CD8-positive, alpha-beta T cell (primary cell): ENCODE measurements at regions of chr11 and their contacts with region 1.

Region 1: GRCh38 chr11:118870396-118871345 is 13.0 kb upstream of the CXCR5 start:
- DNase-seq: peak in 3 of 9 experiments; percentile 19 to 72 (median 61)
- ATAC-seq: peak; percentile 41
- H3K4me3 ChIP-seq: peak overlapping the region; percentile 22 to 30
- H3K4me3 Mint-ChIP-seq: peak overlapping the region; percentile 79
- H3K27ac ChIP-seq: peak overlapping the region; percentile 83 to 86
- H3K27ac Mint-ChIP-seq: peak overlapping the region; percentile 99
- H3K4me1 ChIP-seq: peaks cover 61% of the 10 kb centered on the region
- H3K4me1 Mint-ChIP-seq: peaks cover 60% of the 10 kb centered on the region
- H3K27me3 ChIP-seq: no peaks in the 10 kb centered on the region
- H3K27me3 Mint-ChIP-seq: no peaks in the 10 kb centered on the region
- CTCF ChIP-seq: no peak

Region 2: DNA sequence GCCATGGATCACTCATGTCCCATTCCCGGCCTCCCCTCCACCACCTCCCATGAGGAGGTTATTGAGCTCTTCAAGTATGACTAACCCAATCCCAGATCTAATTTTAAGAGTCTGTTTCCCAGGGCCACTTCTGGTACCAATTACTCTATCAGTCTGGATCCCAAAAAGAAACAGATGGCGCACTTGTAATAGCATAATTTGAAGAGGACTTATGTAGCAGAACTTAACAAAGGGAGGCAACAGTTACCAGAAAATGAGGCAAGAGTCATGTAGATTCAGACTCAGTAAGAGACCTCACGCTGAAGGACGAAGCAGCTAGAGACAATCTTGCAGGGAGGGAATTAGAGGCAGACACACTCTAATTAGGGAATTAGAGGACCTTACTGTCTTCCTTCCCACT is 126.6 kb before region 1 on chr11:
- CTCF ChIA-PET with region 1: no interaction called
- POLR2A ChIA-PET with region 1: no interaction called
- intact Hi-C with region 1: no loop called
- DNase-seq: no peak
- ATAC-seq: no peak
- H3K4me3 ChIP-seq: no peak overlapping the region
- H3K4me3 Mint-ChIP-seq: no peak overlapping the region
- H3K27ac ChIP-seq: no peak overlapping the region
- H3K27ac Mint-ChIP-seq: no peak overlapping the region
- H3K4me1 ChIP-seq: no peaks in the 10 kb centered on the region
- H3K4me1 Mint-ChIP-seq: peaks cover 6% of the 10 kb centered on the region
- H3K27me3 ChIP-seq: no peaks in the 10 kb centered on the region
- H3K27me3 Mint-ChIP-seq: no peaks in the 10 kb centered on the region
- CTCF ChIP-seq: no peak

Region 3: DNA sequence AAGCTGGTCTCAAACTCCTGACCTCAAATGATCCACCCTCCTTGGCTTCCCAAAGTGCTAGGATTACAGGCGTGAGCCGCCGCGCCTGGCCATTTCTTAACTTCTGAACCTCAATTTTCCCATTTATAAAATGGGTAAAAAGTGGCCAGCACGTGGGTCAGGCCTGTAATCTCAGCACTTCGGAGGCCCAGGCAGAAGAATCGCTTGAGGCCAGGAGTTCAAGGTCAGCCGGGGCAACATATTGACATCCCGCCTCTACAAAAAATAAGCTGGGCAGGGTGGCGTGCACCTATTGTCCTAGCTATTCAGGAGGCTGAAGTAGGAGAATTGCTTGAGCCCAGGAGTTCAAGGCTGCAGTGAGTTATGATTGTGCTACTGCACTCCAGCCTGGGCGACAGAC is 73.2 kb before region 1 on chr11:
- CTCF ChIA-PET with region 1: interaction called, 50 read pairs
- POLR2A ChIA-PET with region 1: interaction called, 119 read pairs
- intact Hi-C with region 1: loop called in 1 of 2 experiments (anchors 1 kb)
- DNase-seq: no peak
- ATAC-seq: no peak
- H3K4me3 ChIP-seq: no peak overlapping the region
- H3K4me3 Mint-ChIP-seq: no peak overlapping the region
- H3K27ac ChIP-seq: no peak overlapping the region
- H3K27ac Mint-ChIP-seq: no peak overlapping the region
- H3K4me1 ChIP-seq: peaks cover 9% of the 10 kb centered on the region
- H3K4me1 Mint-ChIP-seq: peaks cover 14% of the 10 kb centered on the region
- H3K27me3 ChIP-seq: no peaks in the 10 kb centered on the region
- H3K27me3 Mint-ChIP-seq: no peaks in the 10 kb centered on the region
- CTCF ChIP-seq: no peak

Region 4: GRCh38 chr11:118834427-118835028 is 36.1 kb before region 1 on chr11:
- CTCF ChIA-PET with region 1: interaction called, 3 read pairs
- POLR2A ChIA-PET with region 1: interaction called, 11 read pairs
- intact Hi-C with region 1: no loop called
- DNase-seq: peak in 2 of 9 experiments; percentile 25 to 53
- ATAC-seq: no peak
- H3K4me3 ChIP-seq: peak overlapping the region in 1 of 2 experiments; percentile 10
- H3K4me3 Mint-ChIP-seq: peak overlapping the region; percentile 75
- H3K27ac ChIP-seq: peak overlapping the region in 1 of 2 experiments; percentile 18
- H3K27ac Mint-ChIP-seq: peak overlapping the region; percentile 65
- H3K4me1 ChIP-seq: peaks cover 9% of the 10 kb centered on the region
- H3K4me1 Mint-ChIP-seq: peaks cover 20% of the 10 kb centered on the region
- H3K27me3 ChIP-seq: no peaks in the 10 kb centered on the region
- H3K27me3 Mint-ChIP-seq: no peaks in the 10 kb centered on the region
- CTCF ChIP-seq: no peak

Region 5: GRCh38 chr11:118889781-118890180 is 19.1 kb after region 1 on chr11:
- CTCF ChIA-PET with region 1: interaction called, 21 read pairs
- POLR2A ChIA-PET with region 1: interaction called, 35 read pairs
- intact Hi-C with region 1: no loop called
- DNase-seq: no peak
- ATAC-seq: no peak
- H3K4me3 ChIP-seq: no peak overlapping the region
- H3K4me3 Mint-ChIP-seq: peak overlapping the region; percentile 18
- H3K27ac ChIP-seq: no peak overlapping the region
- H3K27ac Mint-ChIP-seq: peak overlapping the region; percentile 85
- H3K4me1 ChIP-seq: peaks cover 77% of the 10 kb centered on the region
- H3K4me1 Mint-ChIP-seq: peaks cover 83% of the 10 kb centered on the region
- H3K27me3 ChIP-seq: no peaks in the 10 kb centered on the region
- H3K27me3 Mint-ChIP-seq: no peaks in the 10 kb centered on the region
- CTCF ChIP-seq: no peak

Region 6: GRCh38 chr11:118907051-118908042 is 36.7 kb after region 1 on chr11:
- CTCF ChIA-PET with region 1: interaction called, 13 read pairs
- POLR2A ChIA-PET with region 1: interaction called, 11 read pairs
- intact Hi-C with region 1: loop called (anchors 5 kb)
- DNase-seq: peak; percentile 79 to 94 (median 87)
- ATAC-seq: peak; percentile 41
- H3K4me3 ChIP-seq: no peak overlapping the region
- H3K4me3 Mint-ChIP-seq: peak overlapping the region; percentile 53
- H3K27ac ChIP-seq: peak overlapping the region; percentile 2 to 61
- H3K27ac Mint-ChIP-seq: peak overlapping the region; percentile 92
- H3K4me1 ChIP-seq: peaks cover 58% of the 10 kb centered on the region
- H3K4me1 Mint-ChIP-seq: peaks cover 58% of the 10 kb centered on the region
- H3K27me3 ChIP-seq: no peaks in the 10 kb centered on the region
- H3K27me3 Mint-ChIP-seq: no peaks in the 10 kb centered on the region
- CTCF ChIP-seq: peak; percentile 91

Region 7: DNA sequence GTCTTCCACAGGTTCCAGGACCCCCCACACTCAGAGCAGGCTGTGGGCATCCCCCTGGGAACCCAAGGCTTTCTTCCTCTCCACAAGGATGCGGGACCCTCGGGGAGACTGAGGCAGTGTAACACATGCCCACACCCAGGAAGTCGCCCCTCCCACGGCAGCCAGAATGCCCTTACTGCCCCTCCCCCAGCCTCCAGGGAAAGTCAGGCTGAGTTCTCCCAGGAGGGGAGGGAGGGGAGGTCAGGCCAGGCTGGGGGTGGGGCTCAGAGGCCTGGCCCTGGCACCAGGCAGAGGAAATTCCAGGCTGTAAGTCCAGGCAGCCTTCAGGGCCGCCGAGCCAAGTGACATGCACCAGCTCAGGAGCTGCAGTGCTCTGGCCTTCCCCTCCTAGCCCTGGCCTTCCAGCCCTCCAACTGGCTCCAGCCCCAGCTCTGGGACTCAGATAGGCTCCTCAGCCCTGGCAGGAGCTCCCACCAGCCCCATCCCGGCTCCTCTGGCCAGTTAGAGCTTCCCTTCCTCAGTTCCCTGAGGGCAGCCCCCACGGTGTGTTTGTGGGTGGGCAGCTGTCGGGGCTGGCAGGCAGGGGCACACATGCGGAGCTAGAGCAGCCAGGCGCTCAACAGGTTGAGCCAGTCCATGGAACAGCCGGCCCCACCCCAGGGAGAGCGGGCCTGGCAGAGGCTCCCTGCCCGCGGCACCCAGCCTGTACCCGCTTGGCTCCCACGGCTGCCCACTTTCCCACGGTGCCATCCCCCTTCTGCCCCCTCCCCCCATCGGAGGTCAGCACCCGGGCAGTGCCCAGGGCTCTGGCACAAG is 51.5 kb after region 1 on chr11:
- CTCF ChIA-PET with region 1: interaction called, 3 read pairs
- POLR2A ChIA-PET with region 1: interaction called, 10 read pairs
- intact Hi-C with region 1: no loop called
- DNase-seq: peak in 2 of 9 experiments; percentile 21 to 42
- ATAC-seq: no peak
- H3K4me3 ChIP-seq: peak overlapping the region; percentile 92 to 95
- H3K4me3 Mint-ChIP-seq: peak overlapping the region; percentile 100
- H3K27ac ChIP-seq: peak overlapping the region; percentile 88 to 95
- H3K27ac Mint-ChIP-seq: peak overlapping the region; percentile 99
- H3K4me1 ChIP-seq: peaks cover 47% of the 10 kb centered on the region
- H3K4me1 Mint-ChIP-seq: peaks cover 56% of the 10 kb centered on the region
- H3K27me3 ChIP-seq: no peaks in the 10 kb centered on the region
- H3K27me3 Mint-ChIP-seq: no peaks in the 10 kb centered on the region
- CTCF ChIP-seq: no peak